ENCODE measurements at regions of chr5 and their contacts with region 1.

Region 1: GRCh38 chr5:60668686-60669304 is 31.2 kb downstream of the DEPDC1B start:
- DNase-seq: no peak
- H3K4me3 ChIP-seq: no peak overlapping the region
- H3K27ac ChIP-seq: no peak overlapping the region
- H3K27me3 ChIP-seq: no peaks in the 10 kb centered on the region
- CTCF ChIP-seq: peak; percentile 65

Region 2: DNA sequence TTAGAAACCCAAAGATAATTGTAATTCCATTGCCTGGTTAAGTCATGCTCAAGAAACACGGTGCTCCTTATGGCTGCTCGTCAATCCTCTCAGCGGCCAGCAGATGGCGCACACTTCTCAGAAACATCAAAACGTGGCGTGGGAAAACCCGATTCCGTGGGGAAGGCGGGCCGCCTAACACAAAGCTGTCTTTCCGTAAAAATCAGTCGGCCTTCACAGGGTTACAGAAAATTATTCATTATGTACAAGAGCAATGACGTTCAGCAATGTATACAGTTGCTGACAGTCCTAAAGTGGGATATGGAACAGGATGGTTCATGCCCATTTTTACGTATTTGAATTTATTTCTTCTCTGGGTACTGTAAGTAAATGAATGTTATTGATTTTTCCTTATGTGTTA is 858.8 kb before region 1 on chr5:
- CTCF ChIA-PET with region 1: interaction called, 18 read pairs
- POLR2A ChIA-PET with region 1: no interaction called
- DNase-seq: peak; percentile 55
- H3K4me3 ChIP-seq: 0 out of 2 replicates have a peak overlapping the region, but pooled peaks have one; percentile 7
- H3K27ac ChIP-seq: no peak overlapping the region
- H3K27me3 ChIP-seq: no peaks in the 10 kb centered on the region
- CTCF ChIP-seq: peak; percentile 93

Region 3: DNA sequence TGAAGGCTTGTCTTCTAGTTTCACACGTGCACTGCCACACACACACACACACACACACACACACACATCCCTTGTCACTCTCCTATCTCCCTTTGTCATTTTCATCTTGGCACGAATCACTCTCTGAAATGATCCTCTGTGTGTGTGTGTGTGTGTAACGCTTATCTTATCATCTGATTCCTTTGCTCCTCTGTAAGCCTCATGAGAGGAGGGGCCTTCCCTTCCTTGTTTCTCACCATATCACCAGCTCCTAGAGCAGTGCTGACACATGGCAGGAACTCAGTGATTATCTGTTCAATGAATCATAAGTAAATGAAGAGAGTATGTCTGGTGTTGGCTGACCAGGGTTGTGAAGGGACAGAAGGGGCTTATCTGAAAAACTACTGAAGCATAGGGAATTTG is 828.6 kb before region 1 on chr5:
- CTCF ChIA-PET with region 1: no interaction called
- POLR2A ChIA-PET with region 1: no interaction called
- DNase-seq: no peak
- H3K4me3 ChIP-seq: no peak overlapping the region
- H3K27ac ChIP-seq: no peak overlapping the region
- H3K27me3 ChIP-seq: no peaks in the 10 kb centered on the region
- CTCF ChIP-seq: no peak

Region 4: DNA sequence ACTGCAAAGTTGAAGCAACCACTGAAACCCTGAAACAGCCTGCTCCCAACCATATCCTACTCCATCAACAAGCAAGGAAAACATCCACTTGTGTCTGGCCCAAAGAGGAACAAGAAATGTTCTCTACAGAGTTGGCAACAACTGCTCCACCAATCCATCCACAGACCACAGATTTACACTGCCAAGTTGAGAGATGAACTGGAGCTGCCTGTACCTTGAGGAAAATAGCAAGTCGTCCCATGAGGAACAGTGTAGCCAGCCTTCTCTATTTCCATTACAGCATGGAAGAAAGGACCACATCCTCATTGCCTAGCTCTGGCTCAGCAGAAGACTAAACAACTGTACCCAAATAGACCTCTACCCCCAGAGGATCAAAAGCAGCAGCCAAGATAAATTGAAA is 29.3 kb before region 1 on chr5:
- CTCF ChIA-PET with region 1: interaction called, 11 read pairs
- POLR2A ChIA-PET with region 1: no interaction called
- DNase-seq: no peak
- H3K4me3 ChIP-seq: no peak overlapping the region
- H3K27ac ChIP-seq: no peak overlapping the region
- H3K27me3 ChIP-seq: no peaks in the 10 kb centered on the region
- CTCF ChIP-seq: no peak

Region 5: GRCh38 chr5:60649283-60649917 is 19.4 kb before region 1 on chr5:
- CTCF ChIA-PET with region 1: interaction called, 16 read pairs
- POLR2A ChIA-PET with region 1: no interaction called
- DNase-seq: peak; percentile 11
- H3K4me3 ChIP-seq: no peak overlapping the region
- H3K27ac ChIP-seq: no peak overlapping the region
- H3K27me3 ChIP-seq: no peaks in the 10 kb centered on the region
- CTCF ChIP-seq: peak; percentile 78

Region 6: DNA sequence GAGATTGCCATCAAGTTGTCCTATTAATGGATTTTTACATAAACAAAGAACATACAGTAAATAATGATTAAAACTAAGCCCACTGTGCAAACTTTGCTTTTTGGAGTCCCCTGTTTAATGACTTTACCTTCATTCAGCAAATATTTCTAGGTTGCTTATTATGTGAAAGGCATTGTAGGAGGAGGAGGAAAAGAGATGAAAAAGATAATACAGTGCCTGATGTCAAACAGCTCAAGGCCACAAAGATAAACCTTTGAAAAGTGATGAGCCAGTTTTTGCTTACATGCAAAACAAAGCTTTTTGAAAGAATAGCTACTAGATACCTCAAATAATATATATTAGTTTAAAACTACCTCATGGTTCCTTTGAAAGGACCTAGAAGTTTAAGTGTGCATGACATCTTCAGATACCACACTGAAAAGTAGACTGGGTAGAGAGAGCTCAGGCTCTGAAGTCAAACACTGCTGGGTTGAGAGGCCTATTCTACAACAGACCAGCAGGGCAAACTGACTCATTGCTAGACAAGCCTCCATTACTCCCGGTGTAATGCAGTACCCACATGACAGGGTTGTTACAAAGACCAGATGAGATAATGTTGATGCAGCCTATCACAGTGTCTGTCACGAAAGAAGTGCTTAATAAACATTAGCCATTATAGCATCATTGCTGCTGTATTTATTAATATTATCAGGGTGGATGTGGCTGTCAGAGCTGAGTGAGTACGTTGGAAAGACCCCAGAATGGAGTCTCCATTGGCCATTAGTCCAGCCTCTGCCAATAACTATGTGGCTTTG is 19.3 kb after region 1 on chr5:
- CTCF ChIA-PET with region 1: interaction called, 18 read pairs
- POLR2A ChIA-PET with region 1: no interaction called
- DNase-seq: peak; percentile 34
- H3K4me3 ChIP-seq: no peak overlapping the region
- H3K27ac ChIP-seq: no peak overlapping the region
- H3K27me3 ChIP-seq: no peaks in the 10 kb centered on the region
- CTCF ChIP-seq: peak; percentile 65

Region 7: DNA sequence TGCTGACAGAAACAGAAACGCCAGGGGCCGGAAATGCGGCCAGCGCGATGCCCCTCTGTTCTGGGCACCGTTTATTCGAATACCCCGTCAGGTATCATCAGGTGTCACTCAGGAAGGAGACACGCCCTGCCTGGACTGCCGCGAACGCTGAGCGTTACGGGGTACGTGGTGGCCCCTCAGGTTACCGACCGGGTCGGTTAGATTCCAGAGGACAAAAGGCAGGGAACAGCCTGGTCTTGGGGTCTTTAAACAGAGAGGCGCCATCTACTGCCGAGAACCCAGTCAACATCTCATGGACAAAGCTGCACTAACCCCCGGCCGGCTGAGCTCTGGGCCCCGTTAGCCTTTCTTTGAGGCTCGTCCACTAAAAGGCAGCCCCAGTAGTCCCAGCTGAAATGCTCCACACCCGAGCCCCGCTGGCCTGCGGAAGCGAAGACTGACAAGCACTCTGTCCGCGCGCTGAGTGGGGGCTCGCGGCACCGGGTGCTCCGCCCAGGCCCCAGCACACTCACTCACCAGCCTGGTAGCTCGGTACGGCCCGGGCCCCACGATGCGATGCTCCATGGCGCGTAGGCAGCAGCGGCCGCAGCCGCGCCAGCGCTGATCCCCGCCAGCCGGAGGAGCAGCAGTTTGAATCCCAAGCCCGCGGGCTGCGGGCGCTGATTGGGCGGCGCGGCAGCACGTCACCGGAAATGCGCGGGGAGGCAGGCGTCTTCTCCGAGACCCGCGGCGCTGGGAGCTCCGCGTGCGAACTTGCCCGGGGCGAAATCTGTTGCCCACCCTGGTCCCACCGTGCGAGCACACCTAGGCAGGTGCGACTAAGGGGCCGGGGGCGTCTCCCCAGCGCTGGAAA is 31.0 kb after region 1 on chr5 and contains the start of gene DEPDC1B:
- CTCF ChIA-PET with region 1: interaction called, 30 read pairs
- POLR2A ChIA-PET with region 1: no interaction called
- DNase-seq: peak; percentile 65
- H3K4me3 ChIP-seq: peak within 1 kb of the TSS; percentile 83
- H3K27ac ChIP-seq: peak within 1 kb of the TSS; percentile 91
- H3K27me3 ChIP-seq: peaks cover 5% of the 10 kb centered on the region
- CTCF ChIP-seq: peak; percentile 58
- polyA plus RNA-seq, gene DEPDC1B: 2.9 and 5.4 TPM in 2 replicates

Measured in AG04450 (cell line).